HEK293 (cell line): ENCODE measurements at regions of chr1 and their contacts with region 1.

Region 1: GRCh38 chr1:67489643-67490042 is 59.4 kb upstream of the SERBP1 start:
- H3K4me3 ChIP-seq: no peak overlapping the region
- H3K27ac ChIP-seq: no peak overlapping the region
- H3K4me1 ChIP-seq: no peaks in the 10 kb centered on the region
- CTCF ChIP-seq: no peak

Region 2: GRCh38 chr1:67347688-67348472 is 141.8 kb before region 1 on chr1:
- CTCF ChIA-PET with region 1: interaction called, 18 read pairs
- POLR2A ChIA-PET with region 1: no interaction called
- H3K4me3 ChIP-seq: no peak overlapping the region
- H3K27ac ChIP-seq: no peak overlapping the region
- H3K4me1 ChIP-seq: no peaks in the 10 kb centered on the region
- CTCF ChIP-seq: peak; percentile 69

Region 3: GRCh38 chr1:67472056-67472455 is 17.6 kb before region 1 on chr1:
- CTCF ChIA-PET with region 1: no interaction called
- POLR2A ChIA-PET with region 1: no interaction called
- H3K4me3 ChIP-seq: no peak overlapping the region
- H3K27ac ChIP-seq: no peak overlapping the region
- H3K4me1 ChIP-seq: no peaks in the 10 kb centered on the region
- CTCF ChIP-seq: no peak